CD14-positive monocyte (primary cell): ENCODE measurements at regions of chr17 and their contacts with region 1.

Region 1: GRCh38 chr17:83030432-83030831 is 49.0 kb upstream of the METRNL start:
- DNase-seq: no peak
- H3K4me3 ChIP-seq: no peak overlapping the region
- H3K4me3 Mint-ChIP-seq: no peak overlapping the region
- H3K27ac ChIP-seq: no peak overlapping the region
- H3K27ac Mint-ChIP-seq: peak overlapping the region in 1 of 7 donors; percentile 7
- H3K4me1 ChIP-seq: no peaks in the 10 kb centered on the region
- H3K4me1 Mint-ChIP-seq: no peaks in the 10 kb centered on the region
- H3K27me3 ChIP-seq: no peaks in the 10 kb centered on the region
- H3K27me3 Mint-ChIP-seq: peaks cover 0 to 2% (median 0%) of the 10 kb centered on the region in 3 donors
- CTCF ChIP-seq: no peak

Region 2: GRCh38 chr17:82993005-82993404 is 37.4 kb before region 1 on chr17:
- intact Hi-C with region 1: loop called in 1 of 2 experiments (anchors 5 kb)
- DNase-seq: no peak
- H3K4me3 ChIP-seq: no peak overlapping the region
- H3K4me3 Mint-ChIP-seq: no peak overlapping the region
- H3K27ac ChIP-seq: no peak overlapping the region
- H3K27ac Mint-ChIP-seq: no peak overlapping the region
- H3K4me1 ChIP-seq: peaks cover 3 to 5% of the 10 kb centered on the region in 2 donors
- H3K4me1 Mint-ChIP-seq: peaks cover 13% of the 10 kb centered on the region
- H3K27me3 ChIP-seq: no peaks in the 10 kb centered on the region
- H3K27me3 Mint-ChIP-seq: peaks cover 0 to 1% (median 0%) of the 10 kb centered on the region in 3 donors
- CTCF ChIP-seq: no peak